ENCODE measurements at regions of chrX and their contacts with region 1.

Region 1: GRCh38 chrX:129781134-129781672 is 1.5 kb downstream of the SASH3 start:
- DNase-seq: peak; percentile 77 to 93 (median 83)
- H3K4me3 ChIP-seq: peak overlapping the region; percentile 75 to 86
- H3K4me3 Mint-ChIP-seq: peak overlapping the region; percentile 81 to 97 (median 88)
- H3K27ac ChIP-seq: peak overlapping the region; percentile 62
- H3K27ac Mint-ChIP-seq: peak overlapping the region; percentile 82 to 95 (median 92)
- H3K4me1 ChIP-seq: peaks cover 74% of the 10 kb centered on the region
- H3K4me1 Mint-ChIP-seq: peaks cover 42 to 89% (median 67%) of the 10 kb centered on the region in 4 donors
- H3K27me3 ChIP-seq: no peaks in the 10 kb centered on the region
- H3K27me3 Mint-ChIP-seq: no peaks in the 10 kb centered on the region

Region 2: GRCh38 chrX:129678614-129679195 is 102.5 kb before region 1 on chrX:
- CTCF ChIA-PET with region 1: interaction called, 11 read pairs
- POLR2A ChIA-PET with region 1: interaction called, 6 read pairs
- intact Hi-C with region 1: no loop called
- DNase-seq: peak in 3 of 5 donors; percentile 38 to 66 (median 41)
- H3K4me3 ChIP-seq: peak overlapping the region; percentile 11 to 60
- H3K4me3 Mint-ChIP-seq: peak overlapping the region; percentile 75 to 88 (median 78)
- H3K27ac ChIP-seq: peak overlapping the region; percentile 43
- H3K27ac Mint-ChIP-seq: peak overlapping the region; percentile 10 to 86 (median 71)
- H3K4me1 ChIP-seq: peaks cover 10% of the 10 kb centered on the region
- H3K4me1 Mint-ChIP-seq: peaks cover 1 to 20% (median 6%) of the 10 kb centered on the region in 4 donors
- H3K27me3 ChIP-seq: no peaks in the 10 kb centered on the region
- H3K27me3 Mint-ChIP-seq: no peaks in the 10 kb centered on the region

Region 3: DNA sequence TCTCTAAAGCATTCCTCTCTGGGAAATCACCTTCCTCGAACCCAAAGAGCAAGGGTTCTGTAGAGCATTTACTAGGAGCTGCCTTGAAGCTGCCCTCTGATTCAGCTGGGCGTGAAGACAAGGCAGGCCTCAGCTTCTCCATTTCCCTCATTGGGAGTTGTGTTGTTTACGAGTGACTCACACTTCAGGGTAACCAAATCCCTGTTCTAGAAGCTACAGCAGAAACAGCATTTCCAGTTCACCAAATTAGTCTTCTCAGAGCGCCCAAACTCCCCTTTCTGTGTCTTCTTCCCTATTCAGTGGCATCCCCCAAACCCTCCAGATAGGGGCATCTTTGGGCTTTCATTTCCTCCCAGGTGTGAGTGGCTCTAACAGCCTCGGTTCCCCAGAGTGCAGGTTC is 43.3 kb before region 1 on chrX:
- CTCF ChIA-PET with region 1: interaction called, 7 read pairs
- POLR2A ChIA-PET with region 1: interaction called, 21 read pairs
- intact Hi-C with region 1: loop called (anchors 5 kb)
- DNase-seq: no peak
- H3K4me3 ChIP-seq: no peak overlapping the region
- H3K4me3 Mint-ChIP-seq: no peak overlapping the region
- H3K27ac ChIP-seq: no peak overlapping the region
- H3K27ac Mint-ChIP-seq: peak overlapping the region in 2 of 7 donors; percentile 8 to 15
- H3K4me1 ChIP-seq: peaks cover 29% of the 10 kb centered on the region
- H3K4me1 Mint-ChIP-seq: peaks cover 14 to 42% (median 24%) of the 10 kb centered on the region in 4 donors
- H3K27me3 ChIP-seq: no peaks in the 10 kb centered on the region
- H3K27me3 Mint-ChIP-seq: no peaks in the 10 kb centered on the region

Region 4: GRCh38 chrX:129759576-129760061 is 21.6 kb before region 1 on chrX:
- CTCF ChIA-PET with region 1: interaction called, 28 read pairs
- POLR2A ChIA-PET with region 1: interaction called, 1,390 read pairs
- intact Hi-C with region 1: loop called (anchors 1 kb)
- DNase-seq: peak; percentile 63 to 73 (median 69)
- H3K4me3 ChIP-seq: no peak overlapping the region
- H3K4me3 Mint-ChIP-seq: peak overlapping the region; percentile 58 to 78 (median 67)
- H3K27ac ChIP-seq: peak overlapping the region; percentile 54
- H3K27ac Mint-ChIP-seq: peak overlapping the region; percentile 84 to 95 (median 91)
- H3K4me1 ChIP-seq: peaks cover 82% of the 10 kb centered on the region
- H3K4me1 Mint-ChIP-seq: peaks cover 39 to 76% (median 56%) of the 10 kb centered on the region in 4 donors
- H3K27me3 ChIP-seq: no peaks in the 10 kb centered on the region
- H3K27me3 Mint-ChIP-seq: no peaks in the 10 kb centered on the region

Region 5: DNA sequence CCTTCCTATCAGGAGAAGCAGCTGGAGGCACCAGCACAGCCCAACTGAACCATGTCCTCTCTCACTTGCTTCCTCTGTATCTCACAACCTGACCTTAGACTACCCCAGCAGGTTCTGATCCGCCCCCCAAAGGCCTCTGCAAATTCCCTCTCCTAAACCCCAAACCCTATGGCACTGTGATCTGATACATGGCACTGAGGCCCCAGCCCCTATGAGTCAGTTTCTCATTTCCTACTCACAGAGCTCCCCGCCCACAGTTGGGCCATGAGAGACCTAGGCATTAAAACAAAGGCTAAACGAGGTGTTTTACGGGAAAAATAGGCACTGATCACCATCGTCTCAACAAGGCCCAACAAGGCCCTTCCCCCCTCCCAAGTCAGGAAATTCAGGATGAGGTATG is 17.7 kb after region 1 on chrX:
- CTCF ChIA-PET with region 1: interaction called, 12 read pairs
- POLR2A ChIA-PET with region 1: interaction called, 1,390 read pairs
- intact Hi-C with region 1: loop called (anchors 2 kb)
- DNase-seq: no peak
- H3K4me3 ChIP-seq: no peak overlapping the region
- H3K4me3 Mint-ChIP-seq: no peak overlapping the region
- H3K27ac ChIP-seq: no peak overlapping the region
- H3K27ac Mint-ChIP-seq: peak overlapping the region; percentile 18 to 58 (median 32)
- H3K4me1 ChIP-seq: peaks cover 7% of the 10 kb centered on the region
- H3K4me1 Mint-ChIP-seq: peaks cover 2 to 17% (median 9%) of the 10 kb centered on the region in 4 donors
- H3K27me3 ChIP-seq: no peaks in the 10 kb centered on the region
- H3K27me3 Mint-ChIP-seq: no peaks in the 10 kb centered on the region

Measured in CD4-positive, alpha-beta memory T cell (primary cell).